H1 (cell line): ENCODE measurements at regions of chr7 and their contacts with region 1.

Region 1: GRCh38 chr7:37916673-37917660 is at the start of gene SFRP4:
- DNase-seq: peak in 1 of 2 experiments; percentile 81
- H3K4me3 ChIP-seq: peak within 1 kb of the TSS; percentile 30 to 66 (median 56)
- H3K27ac ChIP-seq: no peak within 1 kb of the TSS
- H3K4me1 ChIP-seq: peaks cover 0 to 10% (median 5%) of the 10 kb centered on the region in 4 experiments; a peak in 6 of 7 replicates
- H3K27me3 ChIP-seq: peaks cover 8 to 44% (median 29%) of the 10 kb centered on the region in 4 experiments
- CTCF ChIP-seq: peak; percentile 54 to 74 (median 66)
- EP300 ChIP-seq: no peak
- POLR2A ChIP-seq: no peak
- RAD21 ChIP-seq: peak; percentile 56 to 68
- total RNA-seq, gene SFRP4: not detected in 2 replicates

Region 2: GRCh38 chr7:37495574-37496184 is 421.3 kb before region 1 on chr7:
- CTCF ChIA-PET with region 1: no interaction called
- POLR2A ChIA-PET with region 1: no interaction called
- DNase-seq: no peak
- H3K4me3 ChIP-seq: no peak overlapping the region
- H3K27ac ChIP-seq: no peak overlapping the region
- H3K4me1 ChIP-seq: peaks cover 0 to 2% (median 0%) of the 10 kb centered on the region in 4 experiments; a peak in 3 of 7 replicates
- H3K27me3 ChIP-seq: no peaks in the 10 kb centered on the region
- CTCF ChIP-seq: peak in 2 of 3 experiments; percentile 29 to 49; a peak in 2 of 4 replicates
- EP300 ChIP-seq: no peak
- POLR2A ChIP-seq: no peak
- RAD21 ChIP-seq: peak; percentile 27 to 36; a peak in 2 of 4 replicates

Region 3: DNA sequence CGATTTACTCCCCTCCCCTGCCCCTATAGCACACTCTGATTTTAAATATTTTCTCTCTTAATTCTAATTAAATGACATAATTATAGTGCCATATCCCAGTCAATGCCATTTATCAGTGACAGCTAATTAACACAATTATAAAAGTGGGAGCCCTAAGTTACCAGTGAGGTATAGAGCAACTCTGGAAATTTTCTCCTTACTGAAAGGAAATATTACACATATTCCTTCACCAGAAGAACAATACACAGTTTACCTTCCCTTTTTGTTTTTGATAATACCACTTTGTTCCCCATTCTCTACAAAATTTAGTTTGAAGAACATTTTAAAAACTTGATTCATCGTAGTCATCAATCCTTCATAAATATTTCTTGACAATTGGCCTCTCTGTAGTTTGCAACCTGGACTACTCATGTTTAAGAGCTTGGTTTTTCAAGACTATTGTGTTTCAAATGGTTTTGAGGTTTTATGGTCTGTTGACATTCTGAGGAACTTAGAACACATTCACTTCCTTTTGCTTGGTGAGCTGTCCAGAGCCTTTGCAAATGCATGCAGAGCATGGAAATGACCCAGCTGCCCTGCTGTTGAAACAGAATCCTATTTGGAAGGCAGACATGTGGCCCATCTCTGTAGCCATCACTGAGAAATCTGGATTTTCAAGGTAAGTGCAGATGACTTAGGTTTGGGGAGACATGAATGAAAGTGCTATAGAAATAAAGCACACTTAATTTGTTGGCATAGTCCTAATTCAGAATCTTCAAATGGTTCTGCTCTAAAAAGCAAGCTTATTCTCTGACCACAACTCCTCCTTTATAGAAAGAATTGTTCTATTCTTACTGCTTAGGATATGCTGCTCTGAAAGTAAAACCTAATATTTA is 233.5 kb before region 1 on chr7 and contains the start of gene GPR141:
- CTCF ChIA-PET with region 1: no interaction called
- POLR2A ChIA-PET with region 1: no interaction called
- DNase-seq: peak in 1 of 2 experiments; percentile 3
- H3K4me3 ChIP-seq: no peak within 1 kb of the TSS
- H3K27ac ChIP-seq: no peak within 1 kb of the TSS
- H3K4me1 ChIP-seq: peaks cover 0 to 6% (median 2%) of the 10 kb centered on the region in 4 experiments; a peak in 2 of 7 replicates
- H3K27me3 ChIP-seq: no peaks in the 10 kb centered on the region
- CTCF ChIP-seq: no peak
- EP300 ChIP-seq: no peak
- POLR2A ChIP-seq: no peak
- RAD21 ChIP-seq: no peak
- total RNA-seq, gene GPR141: 0.25 and 0.45 TPM in 2 replicates

Region 4: DNA sequence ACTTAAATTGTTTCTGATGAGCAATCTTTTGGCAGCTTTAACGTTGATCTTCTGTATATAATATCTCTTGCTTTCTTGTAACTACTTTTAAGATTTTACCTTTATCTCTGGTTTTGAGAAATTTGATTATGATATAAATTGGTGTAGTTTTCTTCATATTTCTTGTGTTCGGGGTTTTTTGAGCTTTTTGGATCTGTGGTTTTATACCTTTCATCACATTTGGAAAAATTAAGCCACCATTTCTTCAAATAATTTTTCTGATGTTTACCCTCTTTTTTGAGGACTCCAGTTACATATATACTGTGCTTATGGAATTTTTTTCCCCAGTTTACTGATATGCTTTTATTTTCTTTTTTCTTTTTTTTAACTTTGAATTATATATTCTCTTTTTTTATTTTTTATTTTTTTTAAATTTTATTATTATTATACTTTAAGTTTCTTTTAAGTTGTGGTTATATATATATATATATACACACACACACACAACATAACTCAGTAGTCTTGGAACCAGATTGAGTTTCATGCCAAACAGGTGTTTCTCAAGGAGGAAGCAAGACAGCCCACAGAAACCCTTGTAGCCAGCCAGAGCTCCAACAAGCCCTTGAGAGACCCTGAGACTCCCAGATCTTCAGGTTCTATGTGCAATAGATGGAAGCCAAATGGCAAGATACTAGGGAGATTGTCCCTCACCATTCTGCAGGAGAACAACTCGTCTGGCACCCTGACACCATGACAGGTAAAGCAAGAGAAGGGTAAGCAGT is 96.1 kb before region 1 on chr7:
- CTCF ChIA-PET with region 1: no interaction called
- POLR2A ChIA-PET with region 1: no interaction called
- DNase-seq: no peak
- H3K4me3 ChIP-seq: no peak overlapping the region
- H3K27ac ChIP-seq: no peak overlapping the region; the same call in 1 of the 2 replicates
- H3K4me1 ChIP-seq: no peaks in the 10 kb centered on the region
- H3K27me3 ChIP-seq: no peaks in the 10 kb centered on the region
- CTCF ChIP-seq: no peak
- EP300 ChIP-seq: no peak
- POLR2A ChIP-seq: no peak
- RAD21 ChIP-seq: no peak

Region 5: DNA sequence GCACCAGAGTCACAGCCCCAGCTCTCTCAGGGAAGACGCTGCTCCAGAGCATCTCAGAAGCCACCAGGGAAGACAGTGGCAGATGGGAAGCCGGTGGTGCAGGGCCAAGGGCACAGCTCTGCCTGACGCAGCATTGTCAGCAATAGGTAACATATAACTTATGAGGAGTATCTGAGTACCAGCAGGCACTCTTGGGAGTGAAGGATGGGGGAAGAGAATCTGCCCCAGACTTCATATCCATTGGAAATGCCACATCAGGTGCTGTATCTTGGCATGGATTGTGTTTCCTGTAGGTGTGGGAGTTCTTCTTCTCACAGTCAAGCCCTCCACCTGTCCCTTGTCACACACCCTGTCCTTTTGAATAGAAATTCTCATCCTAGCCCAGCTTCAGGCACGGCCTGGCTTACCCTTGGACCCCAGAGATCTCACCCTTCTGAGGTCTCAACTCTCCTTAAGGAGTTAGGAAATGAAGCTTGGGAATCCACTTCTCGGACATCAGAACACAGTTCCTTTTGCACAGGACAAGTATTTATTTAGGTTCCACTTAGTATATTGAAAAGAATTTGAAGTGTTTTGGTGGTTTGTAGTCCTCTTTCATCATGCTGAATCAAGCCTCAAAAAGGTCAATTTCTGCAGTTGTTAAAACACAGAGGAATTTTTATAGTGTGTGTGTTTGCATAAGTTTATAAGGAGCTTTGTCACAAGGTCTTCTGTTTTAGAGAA is 13.4 kb after region 1 on chr7:
- CTCF ChIA-PET with region 1: interaction called, 15 read pairs
- POLR2A ChIA-PET with region 1: no interaction called
- DNase-seq: no peak
- H3K4me3 ChIP-seq: no peak overlapping the region
- H3K27ac ChIP-seq: no peak overlapping the region
- H3K4me1 ChIP-seq: no peaks in the 10 kb centered on the region
- H3K27me3 ChIP-seq: no peaks in the 10 kb centered on the region
- CTCF ChIP-seq: no peak
- EP300 ChIP-seq: no peak
- POLR2A ChIP-seq: no peak
- RAD21 ChIP-seq: no peak

Region 6: GRCh38 chr7:37973915-37974314 is 56.9 kb after region 1 on chr7:
- CTCF ChIA-PET with region 1: interaction called, 18 read pairs
- POLR2A ChIA-PET with region 1: no interaction called
- DNase-seq: no peak
- H3K4me3 ChIP-seq: no peak overlapping the region
- H3K27ac ChIP-seq: no peak overlapping the region
- H3K4me1 ChIP-seq: no peaks in the 10 kb centered on the region
- H3K27me3 ChIP-seq: no peaks in the 10 kb centered on the region
- CTCF ChIP-seq: no peak
- EP300 ChIP-seq: no peak
- POLR2A ChIP-seq: no peak
- RAD21 ChIP-seq: no peak

Region 7: DNA sequence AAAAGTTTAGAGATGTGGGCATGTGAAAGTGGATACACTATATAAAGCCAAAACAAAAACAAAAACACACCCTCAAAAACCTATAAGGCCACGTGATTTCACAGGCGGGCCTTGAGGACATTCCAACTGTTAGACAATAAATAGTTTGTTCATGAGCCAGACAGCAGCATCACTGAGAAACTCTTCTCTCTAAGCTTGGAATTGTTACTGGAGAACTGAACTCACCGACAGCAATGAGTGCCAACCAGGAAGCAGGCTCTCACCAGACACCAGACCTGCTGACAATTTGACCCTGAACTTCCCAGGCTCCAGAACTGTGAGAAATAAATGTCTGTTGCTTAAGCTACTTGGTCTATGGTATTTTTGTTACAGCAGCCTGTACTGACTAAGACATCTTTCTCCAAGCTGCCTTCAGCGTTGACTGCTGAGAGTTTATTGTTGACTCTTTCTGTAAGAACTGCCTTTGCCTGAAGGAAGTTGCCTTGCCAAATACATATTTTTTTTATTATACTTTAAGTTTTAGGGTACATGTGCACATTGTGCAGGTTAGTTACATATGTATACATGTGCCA is 111.0 kb after region 1 on chr7:
- CTCF ChIA-PET with region 1: interaction called, 10 read pairs
- POLR2A ChIA-PET with region 1: no interaction called
- DNase-seq: no peak
- H3K4me3 ChIP-seq: no peak overlapping the region
- H3K27ac ChIP-seq: no peak overlapping the region
- H3K4me1 ChIP-seq: no peaks in the 10 kb centered on the region
- H3K27me3 ChIP-seq: no peaks in the 10 kb centered on the region
- CTCF ChIP-seq: no peak
- EP300 ChIP-seq: no peak
- POLR2A ChIP-seq: no peak
- RAD21 ChIP-seq: no peak

Region 8: DNA sequence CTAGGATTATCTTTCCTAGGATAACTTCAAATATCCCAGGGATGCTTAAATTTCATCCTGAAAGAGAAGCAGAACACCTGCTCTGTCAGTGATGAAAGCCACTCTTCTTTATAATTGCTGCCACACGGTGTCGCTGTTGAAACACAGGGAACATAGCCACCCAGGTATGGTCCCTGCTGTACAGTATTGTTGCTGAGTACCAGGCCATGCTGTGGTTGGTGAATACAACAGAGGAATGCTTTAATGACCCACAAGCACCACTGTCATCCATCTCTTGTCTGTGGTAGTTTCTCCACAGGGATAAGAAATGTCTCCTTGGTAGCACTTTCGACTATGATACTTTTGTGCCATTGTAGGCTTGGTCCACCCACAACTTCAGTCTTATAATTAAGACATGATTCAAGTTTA is 190.5 kb after region 1 on chr7:
- CTCF ChIA-PET with region 1: interaction called, 11 read pairs
- POLR2A ChIA-PET with region 1: no interaction called
- DNase-seq: peak; percentile 7 to 88
- H3K4me3 ChIP-seq: no peak overlapping the region
- H3K27ac ChIP-seq: no peak overlapping the region
- H3K4me1 ChIP-seq: no peaks in the 10 kb centered on the region
- H3K27me3 ChIP-seq: no peaks in the 10 kb centered on the region
- CTCF ChIP-seq: peak; percentile 50 to 91 (median 83)
- EP300 ChIP-seq: no peak
- POLR2A ChIP-seq: no peak
- RAD21 ChIP-seq: peak; percentile 90 to 91

Region 9: GRCh38 chr7:38335492-38336147 is 418.7 kb after region 1 on chr7:
- CTCF ChIA-PET with region 1: interaction called, 13 read pairs
- POLR2A ChIA-PET with region 1: no interaction called
- DNase-seq: peak; percentile 83 to 91
- H3K4me3 ChIP-seq: no peak overlapping the region
- H3K27ac ChIP-seq: no peak overlapping the region
- H3K4me1 ChIP-seq: peaks cover 0 to 12% (median 7%) of the 10 kb centered on the region in 4 experiments; a peak in 5 of 7 replicates
- H3K27me3 ChIP-seq: no peaks in the 10 kb centered on the region
- CTCF ChIP-seq: peak; percentile 96 to 100 (median 99)
- EP300 ChIP-seq: peak in 1 of 2 experiments; percentile 43; a peak in 1 of 3 replicates
- POLR2A ChIP-seq: peak in 1 of 2 experiments; percentile 34; a peak in 1 of 3 replicates
- RAD21 ChIP-seq: peak; percentile 69 to 83